ENCODE measurements at regions of chr15 and their contacts with region 1.

Region 1: GRCh38 chr15:72117486-72118399 is at the start of gene MYO9A:
- DNase-seq: peak; percentile 100
- H3K4me3 ChIP-seq: peak within 1 kb of the TSS; percentile 74 to 96 (median 87)
- H3K27ac ChIP-seq: peak within 1 kb of the TSS; percentile 92 to 97 (median 96)
- H3K4me1 ChIP-seq: peaks cover 35 to 52% (median 51%) of the 10 kb centered on the region in 4 donors
- H3K27me3 ChIP-seq: no peaks in the 10 kb centered on the region
- CTCF ChIP-seq: peak; percentile 10 to 26 (median 14)
- EP300 ChIP-seq: no peak
- POLR2A ChIP-seq: peak; percentile 59
- total RNA-seq, gene MYO9A: 71.1 to 96.8 (median 80.8) TPM

Region 2: DNA sequence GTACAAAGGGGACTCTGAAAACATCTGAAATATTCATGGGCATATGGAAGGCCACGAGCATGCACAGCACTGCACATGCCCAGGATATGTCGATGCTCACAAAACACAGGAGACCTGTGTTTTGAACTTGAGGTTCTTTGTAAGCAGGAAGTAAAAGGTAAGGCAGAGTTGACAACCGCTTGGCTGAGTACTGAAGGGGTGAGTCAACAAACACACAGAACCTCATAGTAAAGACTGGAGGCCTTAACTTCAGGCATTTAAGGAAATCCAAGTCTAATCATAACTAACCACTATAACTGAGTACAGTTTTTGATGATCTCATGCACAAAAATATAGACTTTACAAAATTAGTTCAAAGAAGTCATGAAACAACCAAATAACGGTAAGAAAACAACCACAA is 80.4 kb before region 1 on chr15:
- intact Hi-C with region 1: loop called (anchors 5 kb)
- DNase-seq: no peak
- H3K4me3 ChIP-seq: no peak overlapping the region
- H3K27ac ChIP-seq: no peak overlapping the region
- H3K4me1 ChIP-seq: peaks cover 10 to 51% (median 42%) of the 10 kb centered on the region in 4 donors
- H3K27me3 ChIP-seq: no peaks in the 10 kb centered on the region
- CTCF ChIP-seq: no peak
- EP300 ChIP-seq: no peak
- POLR2A ChIP-seq: no peak

Region 3: DNA sequence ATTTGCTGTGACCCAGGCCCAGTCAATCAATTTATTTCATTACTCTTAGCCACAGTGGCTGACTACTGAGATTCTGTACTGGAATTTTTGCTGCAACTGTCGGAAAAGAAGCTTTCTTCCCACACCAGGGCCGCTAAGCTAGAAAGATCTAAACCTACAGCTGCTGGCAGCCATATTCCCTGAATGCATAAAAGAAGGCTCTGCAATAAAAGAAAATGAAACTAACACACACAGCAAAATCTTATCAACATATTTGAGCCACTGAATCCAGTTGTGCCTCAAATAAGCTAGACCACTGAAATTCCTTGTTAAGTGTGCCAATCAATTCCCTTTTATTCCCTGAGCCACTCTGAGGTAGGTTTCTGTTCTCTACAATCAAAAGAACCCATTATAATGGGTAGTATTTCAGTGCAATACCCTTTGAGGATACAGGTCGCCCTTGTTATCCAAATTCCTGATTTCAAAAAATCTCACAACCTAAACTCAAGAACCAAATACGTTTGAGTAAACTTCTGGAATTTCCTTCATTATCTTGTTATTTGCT is 60.1 kb before region 1 on chr15:
- intact Hi-C with region 1: no loop called
- DNase-seq: no peak
- H3K4me3 ChIP-seq: peak overlapping the region in 3 of 4 donors; percentile 4 to 16 (median 9)
- H3K27ac ChIP-seq: no peak overlapping the region
- H3K4me1 ChIP-seq: peaks cover 5 to 43% (median 34%) of the 10 kb centered on the region in 4 donors
- H3K27me3 ChIP-seq: no peaks in the 10 kb centered on the region
- CTCF ChIP-seq: no peak
- EP300 ChIP-seq: no peak
- POLR2A ChIP-seq: no peak

Region 4: GRCh38 chr15:72155635-72156616 is 38.2 kb after region 1 on chr15:
- intact Hi-C with region 1: loop called (anchors 2 kb)
- DNase-seq: peak; percentile 96
- H3K4me3 ChIP-seq: peak overlapping the region; percentile 48 to 64 (median 62)
- H3K27ac ChIP-seq: peak overlapping the region; percentile 80 to 93 (median 84)
- H3K4me1 ChIP-seq: peaks cover 0 to 40% (median 35%) of the 10 kb centered on the region in 4 donors
- H3K27me3 ChIP-seq: no peaks in the 10 kb centered on the region
- CTCF ChIP-seq: peak; percentile 77 to 90 (median 84)
- EP300 ChIP-seq: no peak
- POLR2A ChIP-seq: no peak

Region 5: DNA sequence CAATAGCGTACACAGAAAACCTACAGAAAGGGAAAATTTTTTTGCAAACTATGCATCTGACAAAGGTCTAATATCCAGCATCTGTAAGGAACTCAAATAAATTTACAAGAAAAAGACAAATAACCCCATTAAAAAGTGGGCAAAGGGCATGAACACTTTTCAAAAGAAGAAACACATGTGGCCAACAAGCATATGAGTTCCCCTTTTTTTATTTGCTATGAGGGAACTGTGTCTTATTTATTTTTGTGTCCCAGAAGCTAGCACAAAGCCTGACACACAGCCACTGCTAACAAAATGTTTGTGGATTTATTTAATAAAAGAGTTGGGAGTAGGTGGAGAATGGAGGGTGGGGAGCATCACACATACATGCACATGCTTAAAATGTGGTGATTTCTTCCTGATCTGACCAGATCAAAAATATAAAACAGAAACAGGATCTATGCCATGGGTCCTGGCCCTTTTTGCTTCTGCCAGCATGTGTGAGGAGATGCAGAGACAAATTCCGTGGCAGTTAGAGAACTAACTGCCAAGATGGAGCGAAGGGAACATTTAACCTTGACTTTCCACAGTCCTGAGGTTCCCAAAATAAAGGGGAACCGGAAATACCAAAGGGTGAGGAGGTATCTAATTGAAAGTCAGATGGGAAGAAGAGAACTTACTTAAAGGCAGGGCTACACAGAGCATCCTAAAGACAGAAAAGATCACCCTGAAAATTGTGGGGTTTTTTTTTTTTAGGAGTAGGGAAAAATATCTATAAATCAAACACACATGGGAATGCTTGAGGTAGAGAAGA is 280.2 kb after region 1 on chr15 and contains the start of gene TMEM202:
- intact Hi-C with region 1: no loop called
- DNase-seq: no peak
- H3K4me3 ChIP-seq: no peak within 1 kb of the TSS
- H3K27ac ChIP-seq: no peak within 1 kb of the TSS
- H3K4me1 ChIP-seq: no peaks in the 10 kb centered on the region
- H3K27me3 ChIP-seq: peaks cover 0 to 43% (median 0%) of the 10 kb centered on the region in 4 donors
- CTCF ChIP-seq: no peak
- EP300 ChIP-seq: no peak
- POLR2A ChIP-seq: no peak
- total RNA-seq, gene TMEM202: not detected

Measured in esophagus muscularis mucosa (tissue), 4 donors.